Natural killer cell (primary cell): ENCODE measurements at regions of chr4 and their contacts with region 1.

Region 1: DNA sequence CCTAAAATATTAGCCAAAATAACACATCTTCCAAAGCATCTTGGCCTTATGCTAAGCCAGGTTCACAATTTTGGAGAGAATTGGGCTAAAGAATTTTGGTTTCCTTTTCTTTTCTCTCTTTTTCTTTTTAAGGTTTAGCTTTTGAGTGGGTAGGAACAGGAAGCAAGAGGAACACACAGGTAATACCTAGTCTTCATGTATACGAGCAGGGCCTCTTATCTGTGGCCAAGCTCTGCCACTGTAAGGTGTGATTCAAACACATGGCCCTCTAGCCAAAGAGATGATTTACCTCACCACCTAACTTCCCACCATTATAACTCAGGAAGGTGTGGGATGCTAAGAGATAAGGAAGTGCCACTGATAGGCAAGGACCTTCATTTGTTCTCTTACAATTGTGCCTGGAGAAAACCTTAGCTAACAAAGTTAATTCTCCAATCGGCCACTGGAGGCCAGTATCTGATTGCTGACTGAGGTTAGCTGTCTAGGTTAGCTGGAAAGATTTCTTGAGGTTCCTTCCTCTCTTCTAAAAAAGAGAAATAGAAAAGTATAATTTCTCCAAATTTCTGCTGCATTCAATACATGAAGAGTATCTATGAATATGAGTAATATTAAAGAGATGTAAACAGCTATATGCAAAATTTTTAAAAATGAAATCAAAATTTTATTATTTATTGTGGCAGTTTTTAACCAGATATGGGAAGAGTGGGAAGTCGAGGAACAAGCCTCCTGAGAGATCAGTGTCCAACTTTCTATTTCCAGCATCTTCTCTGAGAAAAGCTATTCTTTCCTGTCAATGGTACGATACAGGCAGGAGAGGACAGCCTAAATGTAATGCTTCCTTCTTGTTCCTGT is 30.1 kb upstream of the BBS7 start:
- DNase-seq: peak; percentile 21 to 78
- ATAC-seq: peak; percentile 60 to 82 (median 78)
- H3K4me3 ChIP-seq: no peak overlapping the region
- H3K4me3 Mint-ChIP-seq: no peak overlapping the region
- H3K27ac ChIP-seq: no peak overlapping the region
- H3K27ac Mint-ChIP-seq: no peak overlapping the region
- H3K4me1 ChIP-seq: no peaks in the 10 kb centered on the region
- H3K4me1 Mint-ChIP-seq: no peaks in the 10 kb centered on the region
- H3K27me3 ChIP-seq: peaks cover 2% of the 10 kb centered on the region
- H3K27me3 Mint-ChIP-seq: peaks cover 21 to 64% of the 10 kb centered on the region in 2 donors
- CTCF ChIP-seq: peak; percentile 64

Region 2: GRCh38 chr4:122003335-122003734 is 103.0 kb after region 1 on chr4:
- intact Hi-C with region 1: loop called (anchors 5 kb)
- DNase-seq: peak in 1 of 2 donors; percentile 78
- ATAC-seq: peak in 2 of 3 donors; percentile 42 to 52
- H3K4me3 ChIP-seq: no peak overlapping the region
- H3K4me3 Mint-ChIP-seq: no peak overlapping the region
- H3K27ac ChIP-seq: no peak overlapping the region
- H3K27ac Mint-ChIP-seq: no peak overlapping the region
- H3K4me1 ChIP-seq: no peaks in the 10 kb centered on the region
- H3K4me1 Mint-ChIP-seq: no peaks in the 10 kb centered on the region
- H3K27me3 ChIP-seq: peaks cover 4% of the 10 kb centered on the region
- H3K27me3 Mint-ChIP-seq: peaks cover 7 to 11% of the 10 kb centered on the region in 2 donors
- CTCF ChIP-seq: no peak

Region 3: DNA sequence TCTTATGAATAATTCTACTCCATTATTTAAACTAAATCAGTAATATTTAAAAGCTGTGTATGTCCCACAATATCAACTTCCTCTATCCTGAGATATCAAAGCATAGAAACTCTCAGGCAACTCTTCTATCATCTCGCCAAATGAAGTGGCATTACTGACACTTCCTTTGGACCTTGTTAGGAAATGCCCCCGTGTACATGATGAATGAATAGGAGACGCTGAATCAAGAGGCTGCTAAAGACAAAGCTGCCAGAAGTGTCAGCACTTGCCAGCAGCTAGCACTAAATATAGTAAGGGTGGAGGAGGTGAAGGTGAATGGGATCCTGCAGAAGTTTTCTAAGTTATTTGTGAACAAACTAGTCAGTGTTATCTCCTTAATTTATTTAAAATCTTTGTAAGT is 152.3 kb after region 1 on chr4:
- intact Hi-C with region 1: no loop called
- DNase-seq: no peak
- ATAC-seq: no peak
- H3K4me3 ChIP-seq: no peak overlapping the region
- H3K4me3 Mint-ChIP-seq: no peak overlapping the region
- H3K27ac ChIP-seq: no peak overlapping the region
- H3K27ac Mint-ChIP-seq: no peak overlapping the region
- H3K4me1 ChIP-seq: peaks cover 5% of the 10 kb centered on the region
- H3K4me1 Mint-ChIP-seq: peaks cover 0 to 5% of the 10 kb centered on the region in 2 donors
- H3K27me3 ChIP-seq: no peaks in the 10 kb centered on the region
- H3K27me3 Mint-ChIP-seq: peaks cover 0 to 7% of the 10 kb centered on the region in 2 donors
- CTCF ChIP-seq: no peak

Region 4: DNA sequence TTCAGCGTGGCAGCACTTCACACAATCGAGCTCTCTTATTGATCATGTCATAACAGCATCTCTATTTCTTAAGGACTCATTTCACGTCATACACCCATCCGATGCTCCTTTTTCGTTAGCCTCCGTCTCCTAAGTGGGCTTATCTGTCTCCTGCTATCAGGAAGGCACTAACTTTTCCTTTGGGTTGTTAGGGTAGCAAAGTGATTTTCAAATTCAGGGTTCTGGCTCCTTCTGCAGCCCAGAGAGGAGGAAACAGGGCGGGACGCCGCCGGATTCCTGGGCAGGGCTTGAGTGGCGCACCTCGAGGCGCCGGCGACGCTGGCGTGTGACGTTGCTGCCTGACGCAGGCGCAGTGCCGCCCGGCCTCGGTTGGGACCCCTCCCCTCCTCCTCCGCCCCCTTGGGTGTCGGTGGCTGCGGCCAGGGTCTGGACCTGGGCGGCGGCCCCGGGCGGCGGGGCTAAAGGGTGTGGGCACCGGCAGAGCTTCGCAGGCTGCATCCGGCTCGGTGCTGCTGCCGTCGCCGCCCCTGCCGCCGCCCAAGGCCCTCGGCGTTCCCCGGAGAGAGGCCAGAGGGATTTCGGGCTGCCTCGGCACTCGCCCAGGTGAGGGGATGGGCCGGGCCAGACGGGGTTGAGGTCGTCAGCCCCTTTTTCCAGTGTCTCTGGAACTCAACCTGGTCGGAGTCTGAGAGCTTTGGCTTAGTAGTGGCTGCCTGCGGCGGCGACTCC is 251.8 kb after region 1 on chr4 and contains the start of gene BLTP1:
- intact Hi-C with region 1: loop called (anchors 1 kb)
- DNase-seq: peak; percentile 80 to 94
- ATAC-seq: peak; percentile 92 to 96 (median 94)
- H3K4me3 ChIP-seq: peak within 1 kb of the TSS; percentile 82
- H3K4me3 Mint-ChIP-seq: peak within 1 kb of the TSS; percentile 98
- H3K27ac ChIP-seq: peak within 1 kb of the TSS; percentile 83
- H3K27ac Mint-ChIP-seq: peak within 1 kb of the TSS; percentile 94
- H3K4me1 ChIP-seq: no peaks in the 10 kb centered on the region
- H3K4me1 Mint-ChIP-seq: peaks cover 40 to 50% of the 10 kb centered on the region in 2 donors
- H3K27me3 ChIP-seq: no peaks in the 10 kb centered on the region
- H3K27me3 Mint-ChIP-seq: peaks cover 0 to 5% of the 10 kb centered on the region in 2 donors
- CTCF ChIP-seq: no peak
- total RNA-seq, gene BLTP1: 117 to 130 (median 124) TPM

Region 5: DNA sequence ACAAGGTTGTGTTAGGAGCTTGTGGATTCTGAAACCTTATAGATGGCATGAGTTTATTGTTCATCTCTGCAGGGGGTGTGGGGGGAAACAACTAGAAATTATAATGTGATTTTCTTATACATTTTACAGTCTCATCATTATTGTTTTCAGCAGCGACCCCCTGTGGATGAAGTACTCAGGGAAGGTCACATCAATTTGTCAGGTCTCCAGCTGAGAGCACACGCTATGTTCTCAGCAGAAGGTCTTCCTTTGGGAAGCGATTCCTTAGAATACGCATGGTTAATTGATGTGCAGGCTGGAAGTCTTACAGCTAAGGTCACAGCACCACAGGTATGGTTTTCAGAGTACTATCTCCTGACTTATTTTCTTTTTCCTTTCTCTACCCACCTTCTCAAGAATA is 324.0 kb after region 1 on chr4:
- intact Hi-C with region 1: loop called (anchors 2 kb)
- DNase-seq: peak in 1 of 2 donors; percentile 44
- ATAC-seq: no peak
- H3K4me3 ChIP-seq: no peak overlapping the region
- H3K4me3 Mint-ChIP-seq: no peak overlapping the region
- H3K27ac ChIP-seq: no peak overlapping the region
- H3K27ac Mint-ChIP-seq: no peak overlapping the region
- H3K4me1 ChIP-seq: no peaks in the 10 kb centered on the region
- H3K4me1 Mint-ChIP-seq: peaks cover 6 to 8% of the 10 kb centered on the region in 2 donors
- H3K27me3 ChIP-seq: no peaks in the 10 kb centered on the region
- H3K27me3 Mint-ChIP-seq: no peaks in the 10 kb centered on the region
- CTCF ChIP-seq: no peak

Region 6: DNA sequence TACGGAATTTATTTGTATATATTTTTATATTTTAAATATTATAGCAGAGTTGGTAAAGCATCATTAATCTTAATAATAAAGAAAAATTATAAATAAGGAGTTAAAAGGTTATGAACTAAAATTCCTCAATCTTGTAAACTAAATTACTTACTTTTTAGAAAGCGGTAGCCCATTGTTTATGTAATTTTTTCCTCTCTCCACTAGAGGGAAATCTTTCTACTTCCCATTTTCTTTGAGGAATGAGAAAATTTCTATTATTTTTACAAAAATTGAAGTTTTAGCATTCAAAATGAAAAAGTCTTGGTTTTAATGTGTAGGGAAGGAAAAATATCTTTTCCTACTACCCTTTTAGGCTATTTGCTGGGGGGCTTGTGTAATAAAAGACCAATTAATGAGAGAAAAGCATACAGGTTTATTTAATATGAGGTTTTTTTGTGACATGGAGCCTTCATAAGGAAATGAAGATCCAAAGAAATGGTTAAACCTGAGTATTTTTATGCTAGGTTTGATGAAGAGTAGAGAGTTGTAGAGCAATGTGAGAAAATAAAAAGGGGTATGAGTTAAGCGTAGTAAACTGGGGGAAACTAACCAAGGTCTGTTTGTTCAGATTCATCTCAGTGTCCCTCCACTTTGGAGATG is 409.7 kb after region 1 on chr4:
- intact Hi-C with region 1: loop called (anchors 10 kb)
- DNase-seq: peak in 1 of 2 donors; percentile 11
- ATAC-seq: no peak
- H3K4me3 ChIP-seq: no peak overlapping the region
- H3K4me3 Mint-ChIP-seq: no peak overlapping the region
- H3K27ac ChIP-seq: no peak overlapping the region
- H3K27ac Mint-ChIP-seq: no peak overlapping the region
- H3K4me1 ChIP-seq: no peaks in the 10 kb centered on the region
- H3K4me1 Mint-ChIP-seq: no peaks in the 10 kb centered on the region
- H3K27me3 ChIP-seq: no peaks in the 10 kb centered on the region
- H3K27me3 Mint-ChIP-seq: no peaks in the 10 kb centered on the region
- CTCF ChIP-seq: peak; percentile 28

Region 7: DNA sequence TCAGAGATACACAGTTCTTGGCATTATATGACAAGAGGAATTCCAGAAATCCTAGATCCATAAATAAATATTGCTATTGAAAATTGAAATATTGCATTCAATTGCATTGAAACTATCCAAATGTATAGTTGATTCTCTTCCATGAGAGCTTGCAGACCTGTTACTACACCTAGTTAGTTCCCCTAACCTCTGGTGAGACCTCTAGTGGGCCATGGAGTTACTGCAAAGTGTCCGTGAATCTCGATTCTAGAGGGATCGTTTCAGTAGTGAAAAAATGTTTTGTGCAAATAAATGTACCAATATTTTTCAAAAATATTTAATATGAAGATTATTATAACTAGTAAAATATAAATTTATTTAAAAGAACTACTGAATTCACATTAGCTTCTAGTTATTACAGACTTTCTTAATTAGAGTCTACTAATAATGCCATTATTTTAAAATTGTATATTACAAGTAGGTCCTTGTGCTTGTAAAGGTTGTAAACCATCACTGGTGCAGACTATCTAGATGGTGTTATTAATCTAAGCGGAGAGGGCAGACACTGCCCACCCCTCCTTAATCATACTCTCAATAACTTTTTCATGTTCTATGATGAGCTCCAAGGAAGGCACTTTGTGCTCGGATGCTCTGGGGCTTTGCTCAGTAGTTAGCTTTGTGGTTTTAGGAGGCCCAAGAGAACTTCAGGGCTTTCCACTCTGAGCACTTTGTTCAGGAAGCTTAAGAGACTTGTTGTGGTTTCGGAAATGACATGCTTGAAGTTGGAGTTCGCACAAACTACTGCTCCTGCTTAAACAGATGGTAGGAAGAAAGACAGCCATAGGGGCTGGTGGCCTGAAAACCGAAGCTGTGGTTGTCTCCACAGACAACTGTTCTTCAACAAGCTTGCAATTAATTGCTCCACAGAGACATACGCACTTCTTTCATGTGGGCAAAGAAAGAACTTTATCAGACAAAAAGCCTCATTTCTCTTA is 677.7 kb after region 1 on chr4:
- intact Hi-C with region 1: loop called (anchors 1 kb)
- DNase-seq: peak in 1 of 2 donors; percentile 89
- ATAC-seq: peak; percentile 61 to 80 (median 64)
- H3K4me3 ChIP-seq: no peak overlapping the region
- H3K4me3 Mint-ChIP-seq: no peak overlapping the region
- H3K27ac ChIP-seq: no peak overlapping the region
- H3K27ac Mint-ChIP-seq: no peak overlapping the region
- H3K4me1 ChIP-seq: peaks cover 7% of the 10 kb centered on the region
- H3K4me1 Mint-ChIP-seq: peaks cover 4% of the 10 kb centered on the region in 2 donors
- H3K27me3 ChIP-seq: no peaks in the 10 kb centered on the region
- H3K27me3 Mint-ChIP-seq: peaks cover 0 to 17% of the 10 kb centered on the region in 2 donors
- CTCF ChIP-seq: peak; percentile 68